Activated T-helper 1 cell treated with anti-CD3 and anti-CD28 coated beads, Interleukin-12 subunit alpha, Interleukin-12 subunit beta, Interleukin-2, Interleukin-4 antibody, amounts not matched to agents 30 ng/mL and 10 ng/mL and 1 ng/mL, durations not matched to agents 14 hours and 24 hours and 36 hours (primary cell): ENCODE measurements at regions of chr6 and their contacts with region 1.

Region 1: DNA sequence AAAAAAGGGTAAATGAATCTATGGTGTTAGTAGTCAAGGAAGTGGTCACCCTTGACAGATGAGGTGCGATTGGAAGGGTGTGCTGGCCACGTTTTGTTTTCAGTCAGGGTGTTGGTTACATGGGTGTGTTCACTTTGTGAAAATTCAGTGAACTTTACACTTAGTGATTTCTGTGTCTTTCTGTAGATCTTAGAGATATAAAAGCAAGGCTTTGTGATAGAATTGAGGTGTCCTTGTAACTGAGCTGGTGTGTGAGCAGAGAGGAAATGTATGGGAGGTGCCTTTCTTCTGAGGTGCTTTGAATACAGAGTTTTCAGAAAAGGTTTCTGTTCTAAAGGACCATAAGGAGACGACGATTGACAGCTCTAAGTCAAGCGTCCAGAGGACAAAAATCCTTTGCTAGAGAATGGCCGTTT is 90.5 kb downstream of the SAMD3 start:
- DNase-seq: peak; percentile 72
- H3K4me3 Mint-ChIP-seq: peak overlapping the region; percentile 36
- H3K27ac Mint-ChIP-seq: peak overlapping the region; percentile 84
- H3K4me1 Mint-ChIP-seq: peaks cover 83% of the 10 kb centered on the region
- H3K27me3 Mint-ChIP-seq: no peaks in the 10 kb centered on the region

Region 2: GRCh38 chr6:129672881-129673643 is 459.2 kb before region 1 on chr6:
- intact Hi-C with region 1: loop called (anchors 5 kb)
- DNase-seq: peak; percentile 20
- H3K4me3 Mint-ChIP-seq: peak overlapping the region; percentile 66
- H3K27ac Mint-ChIP-seq: peak overlapping the region; percentile 95
- H3K4me1 Mint-ChIP-seq: peaks cover 56% of the 10 kb centered on the region
- H3K27me3 Mint-ChIP-seq: no peaks in the 10 kb centered on the region

Region 3: GRCh38 chr6:130183271-130184222 is 51.3 kb after region 1 on chr6:
- intact Hi-C with region 1: loop called (anchors 1 kb)
- DNase-seq: peak; percentile 40
- H3K4me3 Mint-ChIP-seq: peak overlapping the region; percentile 47
- H3K27ac Mint-ChIP-seq: peak overlapping the region; percentile 90
- H3K4me1 Mint-ChIP-seq: peaks cover 50% of the 10 kb centered on the region
- H3K27me3 Mint-ChIP-seq: no peaks in the 10 kb centered on the region

Region 4: GRCh38 chr6:130259557-130259956 is 127.3 kb after region 1 on chr6:
- intact Hi-C with region 1: loop called (anchors 2 kb)
- DNase-seq: no peak
- H3K4me3 Mint-ChIP-seq: no peak overlapping the region
- H3K27ac Mint-ChIP-seq: peak overlapping the region; percentile 51
- H3K4me1 Mint-ChIP-seq: peaks cover 46% of the 10 kb centered on the region
- H3K27me3 Mint-ChIP-seq: no peaks in the 10 kb centered on the region

Region 5: DNA sequence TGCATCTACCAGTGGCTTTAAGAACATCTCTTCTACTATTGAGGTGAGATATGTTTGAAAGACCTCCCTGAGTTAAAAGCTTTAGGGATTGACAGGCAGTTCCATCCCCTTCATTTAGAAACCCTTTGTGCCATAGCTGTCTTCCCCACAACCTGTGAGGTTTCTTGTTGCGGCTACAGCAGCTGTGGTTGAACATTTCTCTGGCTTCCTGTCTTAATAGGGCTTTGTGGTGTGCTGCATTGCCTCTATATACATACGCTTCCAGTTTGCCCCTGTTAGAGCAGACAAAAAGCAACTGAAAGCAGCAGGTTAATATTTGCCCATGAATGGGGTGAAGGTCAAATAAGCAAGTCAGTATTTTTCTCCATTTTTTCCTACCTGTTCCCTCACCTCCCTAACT is 443.7 kb after region 1 on chr6:
- intact Hi-C with region 1: loop called (anchors 5 kb)
- DNase-seq: peak; percentile 74
- H3K4me3 Mint-ChIP-seq: peak overlapping the region; percentile 62
- H3K27ac Mint-ChIP-seq: peak overlapping the region; percentile 72
- H3K4me1 Mint-ChIP-seq: peaks cover 48% of the 10 kb centered on the region
- H3K27me3 Mint-ChIP-seq: no peaks in the 10 kb centered on the region

Region 6: DNA sequence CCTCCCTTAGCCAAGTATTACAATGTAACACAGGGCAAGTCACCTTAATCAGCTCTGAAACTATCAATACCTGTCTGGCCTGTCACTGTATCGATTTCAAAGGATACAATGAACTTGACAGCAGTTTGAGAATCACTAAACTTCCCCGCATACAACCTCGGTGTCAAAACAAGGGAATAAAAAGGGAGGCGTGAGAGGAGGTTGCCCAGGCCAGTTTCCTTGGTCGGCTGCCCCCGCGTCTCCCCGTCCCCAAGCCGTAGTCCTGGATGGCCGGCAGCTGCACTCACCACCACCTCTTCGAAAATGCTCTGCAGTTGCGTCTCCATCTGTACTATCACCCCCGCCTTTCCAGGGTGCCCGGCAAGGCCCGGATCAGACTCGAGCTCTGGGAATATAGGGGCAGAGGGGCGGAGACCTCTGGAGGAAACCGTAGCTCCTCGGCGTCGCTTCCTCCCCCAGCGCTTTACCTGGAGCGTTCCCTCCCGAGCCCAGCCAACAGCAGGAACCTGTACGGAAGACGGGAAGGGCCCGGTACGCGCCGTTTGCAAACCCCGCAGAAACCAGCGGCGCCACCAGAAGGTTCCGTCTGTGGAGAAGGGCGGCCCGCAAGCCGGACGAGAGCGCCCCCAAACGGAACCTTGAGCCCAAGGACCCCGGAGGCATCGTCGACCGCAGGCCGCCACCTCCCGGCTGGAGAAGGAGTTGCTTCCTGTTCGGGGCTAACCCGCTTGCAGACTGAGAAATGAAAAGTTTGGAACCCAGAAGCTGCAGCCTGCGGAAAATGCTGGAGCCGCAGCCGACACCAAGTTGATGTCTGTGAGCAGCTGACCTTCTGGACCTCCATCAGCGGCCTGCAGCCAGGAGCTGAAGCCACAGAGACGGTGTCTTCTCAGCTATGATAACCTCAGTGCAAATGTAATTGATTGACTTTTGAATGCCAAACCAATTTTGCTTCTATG is 1495.7 kb after region 1 on chr6 and contains the start of gene MED23:
- intact Hi-C with region 1: loop called (anchors 10 kb)
- DNase-seq: peak; percentile 92
- H3K4me3 Mint-ChIP-seq: peak within 1 kb of the TSS; percentile 99
- H3K27ac Mint-ChIP-seq: peak within 1 kb of the TSS; percentile 94
- H3K4me1 Mint-ChIP-seq: peaks cover 36% of the 10 kb centered on the region
- H3K27me3 Mint-ChIP-seq: no peaks in the 10 kb centered on the region
- total RNA-seq, gene MED23: 34.0 and 36.3 TPM in 2 replicates